Prostate gland (tissue), 2 donors: ENCODE measurements at regions of chr17 and their contacts with region 1.

Region 1: GRCh38 chr17:76452660-76453430 is at the start of gene UBE2O:
- DNase-seq: peak; percentile 76
- H3K4me3 ChIP-seq: peak within 1 kb of the TSS; percentile 65 to 88
- H3K27ac ChIP-seq: peak within 1 kb of the TSS; percentile 57 to 58
- H3K4me1 ChIP-seq: peaks cover 7% of the 10 kb centered on the region
- H3K27me3 ChIP-seq: no peaks in the 10 kb centered on the region
- CTCF ChIP-seq: peak in 2 of 4 experiments; percentile 45 to 54
- POLR2A ChIP-seq: peak; percentile 79
- total RNA-seq, gene UBE2O: 19.9 to 39.8 TPM

Region 2: GRCh38 chr17:76414334-76415295 is 38.2 kb before region 1 on chr17:
- intact Hi-C with region 1: loop called (anchors 5 kb)
- DNase-seq: no peak
- H3K4me3 ChIP-seq: no peak overlapping the region
- H3K27ac ChIP-seq: no peak overlapping the region
- H3K4me1 ChIP-seq: no peaks in the 10 kb centered on the region
- H3K27me3 ChIP-seq: no peaks in the 10 kb centered on the region
- CTCF ChIP-seq: no peak
- POLR2A ChIP-seq: no peak

Region 3: GRCh38 chr17:76473541-76473985 is 20.7 kb after region 1 on chr17:
- intact Hi-C with region 1: no loop called
- DNase-seq: no peak
- H3K4me3 ChIP-seq: no peak overlapping the region
- H3K27ac ChIP-seq: no peak overlapping the region
- H3K4me1 ChIP-seq: no peaks in the 10 kb centered on the region
- H3K27me3 ChIP-seq: no peaks in the 10 kb centered on the region
- CTCF ChIP-seq: peak in 1 of 4 experiments; percentile 17
- POLR2A ChIP-seq: no peak

Region 4: DNA sequence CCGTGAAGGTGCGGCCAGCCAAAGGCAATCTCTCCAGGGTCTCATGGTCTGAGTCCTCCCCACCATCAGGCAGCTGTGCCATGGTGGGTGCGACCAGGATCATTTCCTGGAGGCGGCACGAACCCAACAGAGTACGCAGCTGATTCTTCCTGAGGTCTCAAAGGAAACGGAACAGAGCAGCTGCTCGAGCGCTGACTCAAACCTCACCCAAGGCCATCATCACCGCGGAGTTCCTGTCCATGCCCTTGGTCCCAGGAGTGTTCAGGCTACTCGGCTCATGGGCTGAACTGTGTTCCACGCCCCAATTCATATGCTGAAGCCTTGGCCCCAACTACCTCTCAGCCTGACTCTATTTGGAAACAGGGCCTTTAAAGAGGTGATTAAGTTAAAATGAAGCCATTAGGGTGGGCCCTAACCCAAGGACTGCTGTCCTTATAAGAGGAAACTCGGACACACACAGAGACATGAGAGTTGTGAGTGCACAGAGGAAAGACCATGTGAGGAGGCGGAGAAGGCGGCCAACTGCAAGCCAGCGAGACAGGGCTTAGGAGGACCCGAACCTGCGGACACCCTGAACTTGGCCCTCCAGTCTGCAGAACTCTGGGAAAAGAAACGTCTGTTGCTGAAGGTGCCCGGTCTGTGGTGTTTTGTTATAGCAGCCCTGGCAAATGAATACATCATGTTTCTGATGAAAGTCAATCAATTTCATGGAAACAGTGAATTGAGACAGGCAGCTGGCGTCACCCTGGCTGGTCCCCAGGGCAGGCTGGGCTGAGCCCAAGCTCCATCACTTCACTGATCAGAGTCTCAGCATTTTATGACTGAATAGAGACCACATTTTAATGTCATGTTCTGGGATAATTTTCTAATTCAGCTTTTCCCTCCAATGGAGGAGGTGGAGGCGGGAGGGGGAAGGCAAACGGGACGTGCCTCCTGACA is 244.2 kb after region 1 on chr17:
- intact Hi-C with region 1: no loop called
- DNase-seq: no peak
- H3K4me3 ChIP-seq: no peak overlapping the region
- H3K27ac ChIP-seq: peak overlapping the region; percentile 48 to 62
- H3K4me1 ChIP-seq: peaks cover 16% of the 10 kb centered on the region
- H3K27me3 ChIP-seq: no peaks in the 10 kb centered on the region
- CTCF ChIP-seq: no peak
- POLR2A ChIP-seq: no peak